ENCODE measurements at regions of chr19 and their contacts with region 1.

Region 1: DNA sequence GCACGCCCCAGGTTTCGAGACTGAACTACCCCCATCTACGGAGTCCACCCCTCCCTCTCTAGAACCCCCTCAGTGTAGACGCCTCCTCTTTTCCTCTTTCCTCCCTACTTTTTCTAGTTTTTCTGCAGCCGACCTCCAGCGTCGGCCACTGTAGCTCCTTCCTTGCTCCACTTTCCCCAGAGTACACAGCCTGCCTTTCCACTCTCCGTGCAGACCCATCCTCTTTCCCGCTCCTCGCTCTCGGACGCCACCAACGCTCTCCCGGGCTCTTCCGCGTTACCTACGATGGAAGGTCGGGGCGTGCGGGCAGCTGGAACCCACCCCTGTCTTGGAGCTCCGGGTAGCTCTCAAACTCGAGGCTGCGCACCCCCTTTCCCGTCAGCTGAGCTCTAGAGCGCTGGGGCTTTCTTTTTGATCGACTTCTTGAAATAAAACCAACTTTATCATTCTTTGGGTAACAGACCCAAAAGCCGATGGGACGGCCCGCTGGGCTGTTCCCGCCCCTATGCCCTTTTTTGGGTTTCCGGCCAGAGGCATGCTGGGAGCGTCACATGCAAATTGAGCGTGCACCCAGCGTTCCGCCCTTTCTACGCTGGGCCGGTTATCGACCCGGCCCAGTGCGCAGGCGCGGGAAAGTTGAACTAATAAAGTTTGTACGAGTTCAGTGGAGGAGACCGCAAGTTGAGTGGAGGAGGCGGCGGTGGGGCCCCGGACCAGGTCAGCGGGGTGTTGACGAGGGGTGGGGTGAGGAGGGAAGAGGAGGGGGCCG is at the starts of genes BCL2L12 and IRF3:
- DNase-seq: peak; percentile 97 to 98
- ATAC-seq: peak; percentile 88 to 97 (median 94)
- H3K4me3 ChIP-seq: peak within 1 kb of the TSS; percentile 50 to 94 (median 78)
- H3K27ac ChIP-seq: peak within 1 kb of the TSS; percentile 55 to 92 (median 89)
- H3K4me1 ChIP-seq: peaks cover 10 to 31% (median 19%) of the 10 kb centered on the region in 9 donors
- H3K27me3 ChIP-seq: no peaks in the 10 kb centered on the region
- CTCF ChIP-seq: no peak
- total RNA-seq, gene BCL2L12: 7.8 to 14.6 (median 9.8) TPM
- total RNA-seq, gene IRF3: 22.3 to 39.4 (median 24.7) TPM

Region 2: DNA sequence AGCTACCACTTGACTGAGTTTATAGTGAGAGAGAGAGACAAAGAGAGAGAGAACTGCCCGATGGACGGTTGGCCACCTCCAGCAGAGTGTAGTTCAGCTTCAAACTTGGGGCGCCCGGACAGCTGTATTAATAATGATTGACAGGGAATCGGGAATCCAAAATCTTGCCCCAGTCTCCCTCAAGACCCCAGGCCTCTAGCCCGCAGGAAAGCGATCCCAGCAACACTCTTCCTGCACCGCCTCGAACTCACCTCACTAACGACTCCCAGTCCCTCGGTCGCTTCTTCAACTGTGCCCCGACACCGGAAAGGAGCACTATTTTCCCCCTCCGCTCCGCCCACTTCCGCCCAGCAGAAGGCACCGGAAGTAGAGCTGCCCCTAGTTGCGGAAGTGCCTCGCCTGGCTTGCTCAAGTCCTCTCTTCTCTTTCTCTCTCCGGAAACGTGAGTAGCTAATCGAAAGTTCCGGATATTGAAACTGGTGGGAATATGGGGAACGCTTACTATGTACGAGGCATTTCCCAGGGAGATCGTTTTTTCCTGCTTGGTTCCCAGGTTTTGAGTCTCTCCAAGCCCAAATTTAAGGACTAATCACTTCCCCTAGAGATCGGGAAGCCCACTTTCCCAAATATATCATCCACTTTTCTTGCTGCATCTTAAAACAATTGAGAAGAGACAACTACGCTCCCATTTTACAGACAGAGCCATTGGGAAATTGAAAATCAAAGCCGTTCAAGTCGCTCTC is 85.1 kb before region 1 on chr19 and contains the start of gene NOSIP:
- intact Hi-C with region 1: loop called in 3 of 10 experiments (anchors 5 to 10 kb)
- DNase-seq: peak; percentile 93 to 97
- ATAC-seq: peak; percentile 94 to 98 (median 98)
- H3K4me3 ChIP-seq: peak within 1 kb of the TSS; percentile 46 to 79 (median 68)
- H3K27ac ChIP-seq: peak within 1 kb of the TSS; percentile 28 to 89 (median 84)
- H3K4me1 ChIP-seq: peaks cover 5 to 31% (median 29%) of the 10 kb centered on the region in 9 donors
- H3K27me3 ChIP-seq: no peaks in the 10 kb centered on the region
- CTCF ChIP-seq: no peak
- total RNA-seq, gene NOSIP: 38.0 to 53.9 (median 45.1) TPM

Region 3: DNA sequence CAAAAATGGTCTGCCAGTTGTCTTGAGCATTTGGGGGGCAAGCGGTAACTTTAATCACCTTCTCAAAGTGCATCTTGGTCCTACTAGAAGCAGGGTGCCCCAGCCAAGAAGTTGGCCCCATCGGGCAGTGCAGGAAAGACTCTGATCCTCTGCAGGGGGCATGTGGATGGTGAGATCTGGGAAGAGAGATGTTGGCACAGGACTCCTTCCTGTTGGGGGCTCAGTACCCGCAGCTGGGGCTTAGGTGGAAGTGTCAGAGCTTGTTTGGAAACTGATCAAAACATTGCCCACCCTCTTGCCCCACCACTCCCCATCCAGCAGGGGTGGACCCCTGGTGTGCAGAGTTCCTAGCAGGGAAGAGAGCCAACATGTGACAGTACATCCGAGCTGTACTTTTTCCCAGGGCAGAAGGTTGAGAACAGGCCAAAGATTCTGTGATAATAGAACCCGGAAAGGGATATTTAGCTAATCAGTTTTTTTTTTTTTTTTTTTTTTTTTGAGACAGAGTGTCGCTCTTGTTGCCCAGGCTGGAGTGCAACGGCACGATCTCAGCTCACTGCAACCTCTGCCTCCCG is 34.4 kb before region 1 on chr19:
- intact Hi-C with region 1: no loop called
- DNase-seq: no peak
- ATAC-seq: peak in 7 of 8 donors; percentile 21 to 63 (median 37)
- H3K4me3 ChIP-seq: no peak overlapping the region
- H3K27ac ChIP-seq: peak overlapping the region in 4 of 10 donors; percentile 21 to 49 (median 37)
- H3K4me1 ChIP-seq: peaks cover 5 to 40% (median 23%) of the 10 kb centered on the region in 9 donors
- H3K27me3 ChIP-seq: no peaks in the 10 kb centered on the region
- CTCF ChIP-seq: no peak

Region 4: GRCh38 chr19:49712397-49712859 is 46.9 kb after region 1 on chr19:
- intact Hi-C with region 1: no loop called
- DNase-seq: peak; percentile 40 to 63
- ATAC-seq: peak in 5 of 8 donors; percentile 21 to 74 (median 35)
- H3K4me3 ChIP-seq: peak overlapping the region in 3 of 10 donors; percentile 3 to 14 (median 13)
- H3K27ac ChIP-seq: no peak overlapping the region
- H3K4me1 ChIP-seq: peaks cover 0 to 6% (median 0%) of the 10 kb centered on the region in 9 donors
- H3K27me3 ChIP-seq: no peaks in the 10 kb centered on the region
- CTCF ChIP-seq: no peak

Measured in heart right ventricle (tissue), 16 donors.